T-cell (primary cell): ENCODE measurements at regions of chr10 and their contacts with region 1.

Region 1: DNA sequence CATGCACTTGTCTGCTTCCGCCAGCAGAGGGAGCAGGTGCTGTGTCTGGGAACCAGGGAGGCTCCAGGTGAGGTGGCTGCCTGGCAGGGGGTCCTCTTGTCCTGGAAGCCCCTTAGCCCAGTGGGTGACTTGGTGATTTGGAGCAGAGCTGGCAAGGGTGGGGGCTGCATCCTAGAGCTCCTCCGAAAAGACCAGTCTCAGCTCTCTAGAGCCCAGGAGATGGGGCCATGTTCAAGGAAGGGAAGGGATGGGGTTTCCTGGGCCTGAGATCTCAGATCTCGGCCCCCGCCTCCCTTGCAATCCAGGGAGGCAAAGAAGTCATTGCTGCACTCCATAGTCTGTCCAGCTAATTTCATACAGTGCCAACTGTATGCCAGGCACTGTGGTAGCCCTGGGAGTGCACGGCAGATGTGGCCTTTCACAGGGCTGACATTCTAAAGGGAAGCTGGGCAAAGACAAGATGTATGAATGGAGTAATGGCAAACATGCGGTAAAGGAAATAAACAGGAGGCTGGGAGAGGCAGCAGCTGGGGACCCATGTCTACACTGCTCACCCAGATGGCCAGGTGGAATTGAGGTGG is 20.4 kb upstream of the SFRP5 start:
- DNase-seq: peak; percentile 15 to 83 (median 62)
- ATAC-seq: peak; percentile 48 to 70 (median 67)
- H3K4me3 ChIP-seq: no peak overlapping the region
- H3K4me3 Mint-ChIP-seq: no peak overlapping the region
- H3K27ac ChIP-seq: no peak overlapping the region
- H3K27ac Mint-ChIP-seq: peak overlapping the region in 1 of 2 donors; percentile 49
- H3K4me1 ChIP-seq: peaks cover 10 to 35% of the 10 kb centered on the region in 2 experiments
- H3K4me1 Mint-ChIP-seq: peaks cover 35 to 42% (median 38%) of the 10 kb centered on the region in 3 donors
- H3K27me3 ChIP-seq: peaks cover 0 to 45% of the 10 kb centered on the region in 2 experiments
- H3K27me3 Mint-ChIP-seq: peaks cover 0 to 2% of the 10 kb centered on the region in 2 donors

Region 2: GRCh38 chr10:97188261-97188711 is 603.9 kb before region 1 on chr10:
- CTCF ChIA-PET with region 1: no interaction called
- POLR2A ChIA-PET with region 1: interaction called in 1 of 2 experiments, 14 read pairs
- DNase-seq: no peak
- ATAC-seq: no peak
- H3K4me3 ChIP-seq: no peak overlapping the region
- H3K4me3 Mint-ChIP-seq: no peak overlapping the region
- H3K27ac ChIP-seq: no peak overlapping the region
- H3K27ac Mint-ChIP-seq: no peak overlapping the region
- H3K4me1 ChIP-seq: peaks cover 0 to 6% of the 10 kb centered on the region in 2 experiments
- H3K4me1 Mint-ChIP-seq: peaks cover 6 to 11% (median 7%) of the 10 kb centered on the region in 3 donors
- H3K27me3 ChIP-seq: peaks cover 15 to 70% of the 10 kb centered on the region in 2 experiments
- H3K27me3 Mint-ChIP-seq: peaks cover 54 to 81% of the 10 kb centered on the region in 2 donors

Region 3: DNA sequence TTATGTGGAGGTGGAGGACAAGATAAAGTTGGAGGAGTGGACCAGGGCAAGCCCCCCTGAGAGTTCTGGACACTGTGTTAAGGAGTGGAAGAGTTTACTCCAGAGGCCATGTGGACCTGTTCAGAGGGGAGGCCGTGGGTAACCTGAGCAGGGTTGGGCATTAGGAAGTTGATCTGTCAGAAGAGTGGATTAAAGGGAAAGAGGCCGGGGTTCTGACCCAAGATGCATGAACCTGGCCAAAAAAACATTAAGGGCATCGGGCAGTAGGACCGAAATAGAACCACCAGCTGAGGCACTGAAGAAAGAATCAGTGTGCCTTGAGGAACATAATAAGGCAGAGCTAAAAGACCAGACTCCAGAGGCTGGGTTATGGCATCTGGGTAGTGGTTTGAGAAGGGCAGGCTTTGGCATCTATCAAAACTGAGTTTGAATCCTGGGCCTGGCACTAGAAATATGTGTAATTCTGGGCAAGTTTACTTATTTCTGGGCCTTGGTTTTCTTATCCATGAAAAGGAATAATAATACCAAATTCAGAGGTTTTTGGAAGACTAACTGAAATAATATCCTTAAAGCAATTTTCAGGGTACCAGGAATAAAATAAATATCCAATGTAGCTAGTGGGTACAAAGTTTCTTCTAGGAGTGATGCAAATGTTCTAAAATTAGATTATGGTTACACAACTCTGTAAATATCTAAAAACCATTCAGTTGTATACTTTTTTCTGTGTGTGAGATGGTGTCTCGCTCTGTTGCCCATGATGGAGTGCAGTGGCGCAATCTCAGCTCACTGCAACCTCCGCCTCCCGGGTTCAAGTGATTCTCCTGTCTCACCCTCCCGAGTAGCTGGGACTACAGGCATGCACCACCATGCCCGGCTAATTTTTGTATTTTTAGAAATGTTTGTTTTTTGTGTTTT is 484.1 kb before region 1 on chr10:
- CTCF ChIA-PET with region 1: no interaction called
- POLR2A ChIA-PET with region 1: no interaction called
- DNase-seq: no peak
- ATAC-seq: no peak
- H3K4me3 ChIP-seq: no peak overlapping the region
- H3K4me3 Mint-ChIP-seq: no peak overlapping the region
- H3K27ac ChIP-seq: no peak overlapping the region
- H3K27ac Mint-ChIP-seq: no peak overlapping the region
- H3K4me1 ChIP-seq: no peaks in the 10 kb centered on the region
- H3K4me1 Mint-ChIP-seq: no peaks in the 10 kb centered on the region
- H3K27me3 ChIP-seq: peaks cover 0 to 2% of the 10 kb centered on the region in 2 experiments
- H3K27me3 Mint-ChIP-seq: no peaks in the 10 kb centered on the region

Region 4: DNA sequence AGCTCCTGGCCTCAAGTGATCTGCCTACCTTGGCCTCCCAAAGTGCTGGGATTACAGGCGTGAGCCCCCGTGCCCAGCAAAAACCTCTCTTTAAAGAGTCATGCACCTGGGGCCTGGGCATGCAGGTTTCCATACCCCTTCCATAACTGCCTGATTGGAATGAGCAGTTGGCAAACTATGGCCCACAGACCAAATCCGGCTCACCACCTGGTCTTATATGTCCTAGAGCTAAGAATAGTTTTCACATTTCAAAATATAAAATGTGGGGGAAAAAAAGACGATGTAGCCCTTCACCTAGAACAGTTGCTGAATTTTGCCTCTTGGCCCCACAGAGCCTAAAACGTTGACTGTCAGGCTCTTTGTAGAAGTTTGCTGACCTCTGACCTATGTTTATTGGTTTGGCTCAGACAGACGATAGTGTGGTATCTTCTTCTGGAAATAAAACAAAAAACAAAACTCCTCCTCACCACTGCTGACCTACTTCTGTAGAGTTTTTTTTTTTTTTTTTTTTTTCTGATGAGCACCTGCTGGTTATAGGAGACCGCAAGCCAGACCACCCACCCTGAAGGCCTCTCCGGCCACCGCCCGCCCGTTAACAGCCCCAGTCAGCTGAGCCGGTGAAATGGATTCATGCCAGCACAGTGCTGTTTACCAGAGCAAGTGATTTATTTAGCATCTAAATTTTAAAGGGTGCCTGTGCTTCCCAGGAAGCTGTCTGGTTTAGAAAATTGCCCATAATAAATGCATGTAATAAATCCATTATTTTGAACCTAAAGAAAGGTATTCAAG is 13.1 kb after region 1 on chr10:
- CTCF ChIA-PET with region 1: no interaction called
- POLR2A ChIA-PET with region 1: no interaction called
- DNase-seq: no peak
- ATAC-seq: no peak
- H3K4me3 ChIP-seq: no peak overlapping the region
- H3K4me3 Mint-ChIP-seq: no peak overlapping the region
- H3K27ac ChIP-seq: no peak overlapping the region
- H3K27ac Mint-ChIP-seq: no peak overlapping the region
- H3K4me1 ChIP-seq: no peaks in the 10 kb centered on the region
- H3K4me1 Mint-ChIP-seq: peaks cover 0 to 7% (median 2%) of the 10 kb centered on the region in 3 donors
- H3K27me3 ChIP-seq: peaks cover 0 to 8% of the 10 kb centered on the region in 2 experiments
- H3K27me3 Mint-ChIP-seq: no peaks in the 10 kb centered on the region

Region 5: GRCh38 chr10:97849687-97850402 is 57.6 kb after region 1 on chr10 and contains the start of gene GOLGA7B:
- CTCF ChIA-PET with region 1: interaction called, 4 to 12 read pairs
- POLR2A ChIA-PET with region 1: no interaction called
- DNase-seq: peak; percentile 31 to 74 (median 60)
- ATAC-seq: peak; percentile 82 to 87 (median 85)
- H3K4me3 ChIP-seq: peak within 1 kb of the TSS; percentile 40 to 64
- H3K4me3 Mint-ChIP-seq: peak within 1 kb of the TSS; percentile 85 to 91 (median 90)
- H3K27ac ChIP-seq: no peak within 1 kb of the TSS
- H3K27ac Mint-ChIP-seq: peak within 1 kb of the TSS; percentile 75 to 82
- H3K4me1 ChIP-seq: peaks cover 23 to 47% of the 10 kb centered on the region in 2 experiments
- H3K4me1 Mint-ChIP-seq: peaks cover 42 to 47% (median 43%) of the 10 kb centered on the region in 3 donors
- H3K27me3 ChIP-seq: no peaks in the 10 kb centered on the region
- H3K27me3 Mint-ChIP-seq: no peaks in the 10 kb centered on the region
- total RNA-seq, gene GOLGA7B: 9.4 to 16.7 (median 12.2) TPM

Region 6: GRCh38 chr10:97869091-97870042 is 77.1 kb after region 1 on chr10:
- CTCF ChIA-PET with region 1: interaction called, 26 to 36 read pairs
- POLR2A ChIA-PET with region 1: no interaction called
- DNase-seq: peak; percentile 69 to 89 (median 80)
- ATAC-seq: peak; percentile 98 to 100 (median 99)
- H3K4me3 ChIP-seq: no peak overlapping the region
- H3K4me3 Mint-ChIP-seq: peak overlapping the region in 2 of 3 donors; percentile 9 to 22
- H3K27ac ChIP-seq: peak overlapping the region; percentile 4
- H3K27ac Mint-ChIP-seq: peak overlapping the region; percentile 84 to 86
- H3K4me1 ChIP-seq: peaks cover 10 to 20% of the 10 kb centered on the region in 2 experiments
- H3K4me1 Mint-ChIP-seq: peaks cover 8 to 16% (median 13%) of the 10 kb centered on the region in 3 donors
- H3K27me3 ChIP-seq: peaks cover 0 to 10% of the 10 kb centered on the region in 2 experiments
- H3K27me3 Mint-ChIP-seq: peaks cover 0 to 3% of the 10 kb centered on the region in 2 donors

Region 7: DNA sequence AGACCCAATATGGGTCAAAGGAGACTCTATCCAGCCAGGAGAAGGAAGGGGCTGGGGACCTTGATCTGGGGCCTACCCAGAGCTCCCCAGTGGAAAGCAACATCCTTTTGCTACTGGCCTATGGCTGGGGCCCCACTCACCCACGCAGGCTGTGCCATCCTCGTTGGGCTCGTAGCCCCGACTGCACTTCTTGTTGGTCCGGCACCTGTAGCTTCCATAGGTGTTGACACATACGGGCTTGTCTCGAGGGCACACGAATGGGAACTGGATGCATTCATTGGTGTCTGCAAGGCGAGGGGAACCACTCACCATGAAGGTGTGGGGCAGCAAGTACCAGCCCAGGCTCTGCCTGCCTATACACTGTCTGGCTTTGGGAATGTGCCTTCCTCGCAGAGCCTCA is 87.9 kb after region 1 on chr10:
- CTCF ChIA-PET with region 1: interaction called in 1 of 2 experiments, 12 read pairs
- POLR2A ChIA-PET with region 1: no interaction called
- DNase-seq: no peak
- ATAC-seq: no peak
- H3K4me3 ChIP-seq: no peak overlapping the region
- H3K4me3 Mint-ChIP-seq: no peak overlapping the region
- H3K27ac ChIP-seq: no peak overlapping the region
- H3K27ac Mint-ChIP-seq: no peak overlapping the region
- H3K4me1 ChIP-seq: peaks cover 0 to 13% of the 10 kb centered on the region in 2 experiments
- H3K4me1 Mint-ChIP-seq: no peaks in the 10 kb centered on the region
- H3K27me3 ChIP-seq: peaks cover 0 to 23% of the 10 kb centered on the region in 2 experiments
- H3K27me3 Mint-ChIP-seq: peaks cover 17 to 18% of the 10 kb centered on the region in 2 donors